Activated naive CD4-positive, alpha-beta T cell treated with anti-CD3 and anti-CD28 coated beads for 36 hours (primary cell): ENCODE measurements at regions of chr4 and their contacts with region 1.

Region 1: GRCh38 chr4:99563310-99564186 is at the start of gene TRMT10A:
- DNase-seq: peak; percentile 97
- H3K4me3 Mint-ChIP-seq: peak within 1 kb of the TSS; percentile 93
- H3K27ac Mint-ChIP-seq: peak within 1 kb of the TSS; percentile 96
- H3K4me1 Mint-ChIP-seq: peaks cover 14% of the 10 kb centered on the region
- H3K27me3 Mint-ChIP-seq: peaks cover 6% of the 10 kb centered on the region
- total RNA-seq, gene TRMT10A: 8.8 to 9.2 TPM

Region 2: DNA sequence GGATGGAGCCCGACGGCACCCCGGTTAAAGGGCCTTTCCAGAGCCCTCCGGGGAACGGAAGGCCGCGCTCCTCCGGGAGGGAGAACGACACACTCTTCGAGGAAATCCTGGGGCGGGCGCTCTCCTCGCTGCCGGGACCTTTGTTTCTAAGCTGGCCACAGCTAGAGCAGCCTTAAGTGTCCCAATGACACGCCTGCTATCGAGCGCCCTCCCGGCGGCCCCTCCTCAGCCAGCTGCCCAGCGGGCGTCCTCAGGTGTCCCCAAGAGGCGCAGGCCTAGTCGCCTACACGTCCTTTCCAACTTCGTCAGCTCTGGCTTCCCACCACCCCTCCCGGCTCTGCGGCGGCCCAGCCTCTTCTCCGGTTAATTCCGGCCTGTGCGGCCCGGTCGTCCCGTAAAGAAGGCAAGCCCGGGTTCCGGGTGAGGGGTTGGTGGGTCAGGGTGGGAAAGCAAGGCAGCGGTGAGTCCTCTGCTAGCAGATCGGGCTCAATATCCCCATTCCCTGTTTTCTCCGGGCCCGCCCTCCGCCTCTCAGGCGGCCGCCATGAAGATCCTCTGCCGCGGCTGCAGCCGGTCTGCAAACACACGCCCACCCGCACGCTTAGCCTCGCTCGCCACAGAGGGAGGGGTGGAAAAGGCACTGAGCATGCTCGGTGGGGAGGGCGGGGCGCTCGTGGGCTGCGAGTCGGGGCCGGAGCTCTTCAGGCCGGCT is 1302.8 kb before region 1 on chr4:
- CTCF ChIA-PET with region 1: no interaction called
- intact Hi-C with region 1: loop called (anchors 5 kb)
- DNase-seq: peak; percentile 95
- H3K4me3 Mint-ChIP-seq: peak overlapping the region; percentile 93
- H3K27ac Mint-ChIP-seq: peak overlapping the region; percentile 94
- H3K4me1 Mint-ChIP-seq: peaks cover 43% of the 10 kb centered on the region
- H3K27me3 Mint-ChIP-seq: no peaks in the 10 kb centered on the region

Region 3: DNA sequence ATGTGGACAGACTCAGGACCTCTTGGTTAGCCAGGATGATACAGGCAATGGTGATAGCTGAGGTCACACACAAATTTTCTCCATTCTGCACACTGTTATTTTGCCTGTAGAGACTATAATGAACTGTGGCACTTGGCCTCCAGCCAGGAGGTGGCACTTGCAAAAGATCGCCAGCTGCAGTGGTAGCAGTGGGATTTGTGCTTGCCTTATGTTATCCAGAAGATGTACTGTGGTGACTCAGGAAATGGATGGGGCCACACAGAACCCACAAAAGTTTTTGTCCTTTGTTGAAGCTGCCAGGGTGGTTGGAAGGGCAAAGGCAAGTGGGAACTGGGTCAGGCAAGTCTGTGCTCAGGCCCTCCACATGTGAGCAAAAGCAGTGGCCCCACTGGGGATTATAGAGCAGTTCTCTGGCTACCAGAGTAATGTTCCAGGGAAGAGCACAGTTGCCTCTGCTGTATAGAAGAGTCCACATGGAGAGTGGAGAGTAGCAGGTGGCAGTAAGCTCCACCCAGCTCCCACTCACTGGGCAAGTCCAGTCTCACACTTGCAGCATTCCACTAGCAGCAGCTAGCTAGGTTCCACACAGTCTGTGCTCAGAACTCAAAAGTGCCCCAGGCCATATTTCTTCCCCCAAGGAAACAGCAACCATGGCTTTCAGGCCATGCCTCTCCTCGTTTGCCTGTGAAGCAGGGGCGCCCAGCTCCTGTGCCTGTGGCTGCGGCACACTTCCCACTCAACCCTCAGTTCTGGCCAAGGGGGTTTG is 58.6 kb before region 1 on chr4:
- CTCF ChIA-PET with region 1: no interaction called
- intact Hi-C with region 1: loop called (anchors 1 kb)
- DNase-seq: no peak
- H3K4me3 Mint-ChIP-seq: no peak overlapping the region
- H3K27ac Mint-ChIP-seq: no peak overlapping the region
- H3K4me1 Mint-ChIP-seq: peaks cover 49% of the 10 kb centered on the region
- H3K27me3 Mint-ChIP-seq: no peaks in the 10 kb centered on the region

Region 4: GRCh38 chr4:99755223-99755944 is 191.8 kb after region 1 on chr4:
- CTCF ChIA-PET with region 1: no interaction called
- intact Hi-C with region 1: loop called (anchors 1 kb)
- DNase-seq: no peak
- H3K4me3 Mint-ChIP-seq: no peak overlapping the region
- H3K27ac Mint-ChIP-seq: no peak overlapping the region
- H3K4me1 Mint-ChIP-seq: peaks cover 24% of the 10 kb centered on the region
- H3K27me3 Mint-ChIP-seq: peaks cover 28% of the 10 kb centered on the region

Region 5: GRCh38 chr4:99847362-99847976 is 283.9 kb after region 1 on chr4:
- CTCF ChIA-PET with region 1: no interaction called
- intact Hi-C with region 1: loop called (anchors 1 kb)
- DNase-seq: peak; percentile 61
- H3K4me3 Mint-ChIP-seq: peak overlapping the region; percentile 36
- H3K27ac Mint-ChIP-seq: peak overlapping the region; percentile 90
- H3K4me1 Mint-ChIP-seq: peaks cover 76% of the 10 kb centered on the region
- H3K27me3 Mint-ChIP-seq: no peaks in the 10 kb centered on the region

Region 6: DNA sequence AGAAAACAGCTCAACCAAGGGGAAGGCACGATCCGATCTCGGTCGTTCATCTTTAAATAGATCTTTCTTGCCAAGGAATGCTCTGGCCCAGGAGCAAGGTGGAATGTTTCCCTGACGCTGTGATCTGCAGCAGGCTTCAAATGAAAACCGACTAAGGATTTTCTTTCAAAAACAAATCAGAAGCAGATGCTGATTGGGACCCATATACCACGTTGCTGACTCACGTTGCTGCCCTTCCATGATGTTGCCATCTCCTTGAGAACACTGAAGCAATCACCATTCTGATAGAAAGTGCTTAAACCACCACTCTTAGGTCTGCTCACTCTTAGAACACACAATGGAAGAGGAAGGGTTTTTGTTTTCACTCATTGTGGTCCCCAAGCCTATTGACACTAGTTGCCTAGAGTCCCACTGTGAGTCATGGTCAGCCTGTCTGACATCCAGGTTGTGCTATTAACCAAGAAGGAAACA is 304.6 kb after region 1 on chr4:
- CTCF ChIA-PET with region 1: no interaction called
- intact Hi-C with region 1: no loop called
- DNase-seq: no peak
- H3K4me3 Mint-ChIP-seq: no peak overlapping the region
- H3K27ac Mint-ChIP-seq: no peak overlapping the region
- H3K4me1 Mint-ChIP-seq: peaks cover 7% of the 10 kb centered on the region
- H3K27me3 Mint-ChIP-seq: no peaks in the 10 kb centered on the region

Region 7: GRCh38 chr4:99894161-99894997 is 330.8 kb after region 1 on chr4 and contains the start of gene LAMTOR3:
- CTCF ChIA-PET with region 1: no interaction called
- intact Hi-C with region 1: loop called (anchors 1 kb)
- DNase-seq: peak; percentile 92
- H3K4me3 Mint-ChIP-seq: peak within 1 kb of the TSS; percentile 95
- H3K27ac Mint-ChIP-seq: peak within 1 kb of the TSS; percentile 92
- H3K4me1 Mint-ChIP-seq: peaks cover 32% of the 10 kb centered on the region
- H3K27me3 Mint-ChIP-seq: no peaks in the 10 kb centered on the region
- total RNA-seq, gene LAMTOR3: 24.9 to 26.9 TPM